T-cell (primary cell): ENCODE measurements at regions of chr13 and their contacts with region 1.

Region 1: DNA sequence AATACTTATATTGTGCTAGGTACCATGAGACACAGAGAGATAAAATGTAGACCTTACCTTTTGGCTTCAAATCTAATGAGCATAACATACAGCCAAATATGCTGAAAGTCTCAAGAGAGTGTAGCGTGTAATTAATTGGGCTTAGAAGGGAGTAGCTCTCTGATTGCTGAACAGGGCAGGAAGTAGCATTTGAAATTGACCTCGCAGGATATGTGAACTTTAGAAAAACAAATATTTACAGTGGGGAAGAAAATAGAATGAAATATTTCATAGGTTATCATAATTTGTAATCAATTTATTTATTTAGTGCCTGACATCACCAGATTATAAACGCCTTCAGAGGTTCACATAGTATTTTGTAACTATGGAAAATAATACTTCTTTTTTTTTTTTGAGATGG is 327.1 kb downstream of the RFC3 start:
- DNase-seq: no peak
- ATAC-seq: no peak
- H3K4me3 ChIP-seq: no peak overlapping the region
- H3K4me3 Mint-ChIP-seq: no peak overlapping the region
- H3K27ac ChIP-seq: no peak overlapping the region
- H3K27ac Mint-ChIP-seq: no peak overlapping the region
- H3K4me1 ChIP-seq: no peaks in the 10 kb centered on the region
- H3K4me1 Mint-ChIP-seq: no peaks in the 10 kb centered on the region
- H3K27me3 ChIP-seq: no peaks in the 10 kb centered on the region
- H3K27me3 Mint-ChIP-seq: peaks cover 0 to 2% of the 10 kb centered on the region in 2 donors

Region 2: GRCh38 chr13:33696530-33696929 is 448.5 kb before region 1 on chr13:
- CTCF ChIA-PET with region 1: no interaction called
- POLR2A ChIA-PET with region 1: no interaction called
- DNase-seq: no peak
- ATAC-seq: no peak
- H3K4me3 ChIP-seq: no peak overlapping the region
- H3K4me3 Mint-ChIP-seq: no peak overlapping the region
- H3K27ac ChIP-seq: no peak overlapping the region
- H3K27ac Mint-ChIP-seq: no peak overlapping the region
- H3K4me1 ChIP-seq: no peaks in the 10 kb centered on the region
- H3K4me1 Mint-ChIP-seq: no peaks in the 10 kb centered on the region
- H3K27me3 ChIP-seq: no peaks in the 10 kb centered on the region
- H3K27me3 Mint-ChIP-seq: no peaks in the 10 kb centered on the region

Region 3: DNA sequence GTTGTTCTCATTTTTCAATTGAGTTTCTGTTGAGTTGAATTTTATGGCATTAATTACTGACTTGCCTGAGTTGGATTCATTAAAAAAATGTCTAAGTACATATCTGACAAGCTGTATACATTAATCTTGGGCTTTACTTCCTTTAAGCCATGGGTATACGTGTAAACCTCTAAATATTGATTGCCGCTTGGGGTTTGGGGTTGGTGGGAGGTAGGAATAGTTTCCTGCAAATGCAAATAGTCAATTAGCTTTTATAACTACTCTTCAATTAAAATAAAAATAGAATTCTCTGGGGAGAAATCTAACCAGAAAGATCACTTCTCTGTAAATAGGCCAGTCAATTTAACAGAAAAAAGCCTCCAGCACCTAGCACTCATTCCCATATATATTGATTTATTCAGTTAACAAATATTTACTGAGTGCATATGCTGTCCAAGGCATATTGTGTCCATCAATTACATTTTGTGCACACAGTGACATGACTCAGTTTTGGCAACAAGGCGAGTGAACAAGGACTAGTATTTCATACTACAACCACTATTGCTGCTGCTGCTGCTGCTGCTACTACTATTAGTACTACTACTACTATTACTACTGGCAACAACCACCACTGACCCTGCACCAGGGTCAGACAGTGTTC is 20.3 kb before region 1 on chr13:
- CTCF ChIA-PET with region 1: no interaction called
- POLR2A ChIA-PET with region 1: no interaction called
- DNase-seq: no peak
- ATAC-seq: no peak
- H3K4me3 ChIP-seq: no peak overlapping the region
- H3K4me3 Mint-ChIP-seq: no peak overlapping the region
- H3K27ac ChIP-seq: no peak overlapping the region
- H3K27ac Mint-ChIP-seq: no peak overlapping the region
- H3K4me1 ChIP-seq: no peaks in the 10 kb centered on the region
- H3K4me1 Mint-ChIP-seq: no peaks in the 10 kb centered on the region
- H3K27me3 ChIP-seq: no peaks in the 10 kb centered on the region
- H3K27me3 Mint-ChIP-seq: no peaks in the 10 kb centered on the region

Region 4: DNA sequence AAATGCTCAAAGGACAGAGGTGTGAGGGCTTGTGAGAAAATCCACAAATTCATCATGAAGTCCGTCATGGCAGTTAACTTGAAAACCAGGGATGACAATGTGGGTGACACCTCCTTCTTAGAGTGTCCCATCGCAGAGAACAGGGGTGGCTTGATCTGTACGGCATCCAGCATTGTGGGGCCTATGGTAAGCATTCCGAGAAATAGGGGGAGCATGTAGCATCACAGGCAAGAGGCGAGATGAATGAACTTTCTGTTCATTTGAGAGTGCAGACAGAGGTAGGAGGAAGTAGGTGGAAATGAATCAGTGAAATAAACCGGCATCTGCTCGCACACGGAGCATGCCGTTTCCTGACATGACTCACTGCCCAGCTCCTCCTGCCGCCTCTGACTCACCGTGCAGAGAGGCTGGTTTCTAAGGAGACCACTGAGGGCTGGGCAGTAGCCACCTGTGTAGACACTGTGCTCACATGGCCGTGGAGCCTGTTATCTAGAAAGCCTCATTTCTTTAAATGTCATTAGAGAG is 11.8 kb after region 1 on chr13:
- CTCF ChIA-PET with region 1: no interaction called
- POLR2A ChIA-PET with region 1: no interaction called
- DNase-seq: peak in 1 of 35 experiments; percentile 1
- ATAC-seq: peak in 2 of 4 experiments; percentile 36 to 48
- H3K4me3 ChIP-seq: no peak overlapping the region
- H3K4me3 Mint-ChIP-seq: no peak overlapping the region
- H3K27ac ChIP-seq: no peak overlapping the region
- H3K27ac Mint-ChIP-seq: no peak overlapping the region
- H3K4me1 ChIP-seq: no peaks in the 10 kb centered on the region
- H3K4me1 Mint-ChIP-seq: peaks cover 0 to 6% (median 2%) of the 10 kb centered on the region in 3 donors
- H3K27me3 ChIP-seq: no peaks in the 10 kb centered on the region
- H3K27me3 Mint-ChIP-seq: peaks cover 2 to 13% of the 10 kb centered on the region in 2 donors

Region 5: GRCh38 chr13:34349091-34349722 is 204.1 kb after region 1 on chr13:
- CTCF ChIA-PET with region 1: no interaction called
- POLR2A ChIA-PET with region 1: interaction called in 1 of 2 experiments, 12 read pairs
- DNase-seq: no peak
- ATAC-seq: no peak
- H3K4me3 ChIP-seq: no peak overlapping the region
- H3K4me3 Mint-ChIP-seq: no peak overlapping the region
- H3K27ac ChIP-seq: no peak overlapping the region
- H3K27ac Mint-ChIP-seq: no peak overlapping the region
- H3K4me1 ChIP-seq: no peaks in the 10 kb centered on the region
- H3K4me1 Mint-ChIP-seq: no peaks in the 10 kb centered on the region
- H3K27me3 ChIP-seq: no peaks in the 10 kb centered on the region
- H3K27me3 Mint-ChIP-seq: no peaks in the 10 kb centered on the region